Uterus (tissue), 4 donors: ENCODE measurements at regions of chr17 and their contacts with region 1.

Region 1: DNA sequence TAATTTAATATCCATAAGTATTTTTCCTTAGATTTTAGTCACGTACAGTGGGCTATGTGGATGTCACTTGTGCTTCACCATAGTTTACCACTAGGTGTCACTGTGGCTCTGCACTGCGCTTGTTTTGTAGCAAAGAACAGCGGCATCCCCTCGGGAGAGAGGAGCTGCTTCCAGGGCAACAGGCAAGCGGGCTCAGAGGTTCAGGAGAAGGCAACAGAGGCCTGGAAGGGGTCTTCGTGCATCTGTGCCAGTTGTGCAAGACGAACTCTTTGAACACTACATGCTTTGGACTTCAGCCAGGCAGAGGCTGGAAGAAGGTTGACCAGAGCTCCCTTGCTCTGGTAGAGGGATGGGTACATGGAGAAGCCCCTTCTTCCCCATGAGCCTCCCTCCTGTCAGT is 20.6 kb downstream of the CYB561 start:
- DNase-seq: peak; percentile 77 to 82
- H3K4me3 ChIP-seq: no peak overlapping the region
- H3K27ac ChIP-seq: no peak overlapping the region
- H3K4me1 ChIP-seq: no peaks in the 10 kb centered on the region
- H3K27me3 ChIP-seq: no peaks in the 10 kb centered on the region
- CTCF ChIP-seq: peak; percentile 90 to 96 (median 94)
- POLR2A ChIP-seq: no peak

Region 2: GRCh38 chr17:63611354-63611753 is 185.9 kb after region 1 on chr17:
- intact Hi-C with region 1: loop called (anchors 5 kb)
- DNase-seq: no peak
- H3K4me3 ChIP-seq: no peak overlapping the region
- H3K27ac ChIP-seq: no peak overlapping the region
- H3K4me1 ChIP-seq: no peaks in the 10 kb centered on the region
- H3K27me3 ChIP-seq: no peaks in the 10 kb centered on the region
- CTCF ChIP-seq: no peak
- POLR2A ChIP-seq: no peak